Aorta (tissue), 5 donors: ENCODE measurements at regions of chr15 and their contacts with region 1.

Region 1: GRCh38 chr15:58933281-58934113 is at the start of gene SLTM:
- DNase-seq: peak; percentile 96 to 97
- ATAC-seq: peak; percentile 98
- H3K4me3 ChIP-seq: peak within 1 kb of the TSS; percentile 96 to 98
- H3K27ac ChIP-seq: peak within 1 kb of the TSS; percentile 91 to 99
- H3K4me1 ChIP-seq: no peaks in the 10 kb centered on the region
- H3K27me3 ChIP-seq: no peaks in the 10 kb centered on the region
- total RNA-seq, gene SLTM: 93.0 to 99.5 TPM

Region 2: DNA sequence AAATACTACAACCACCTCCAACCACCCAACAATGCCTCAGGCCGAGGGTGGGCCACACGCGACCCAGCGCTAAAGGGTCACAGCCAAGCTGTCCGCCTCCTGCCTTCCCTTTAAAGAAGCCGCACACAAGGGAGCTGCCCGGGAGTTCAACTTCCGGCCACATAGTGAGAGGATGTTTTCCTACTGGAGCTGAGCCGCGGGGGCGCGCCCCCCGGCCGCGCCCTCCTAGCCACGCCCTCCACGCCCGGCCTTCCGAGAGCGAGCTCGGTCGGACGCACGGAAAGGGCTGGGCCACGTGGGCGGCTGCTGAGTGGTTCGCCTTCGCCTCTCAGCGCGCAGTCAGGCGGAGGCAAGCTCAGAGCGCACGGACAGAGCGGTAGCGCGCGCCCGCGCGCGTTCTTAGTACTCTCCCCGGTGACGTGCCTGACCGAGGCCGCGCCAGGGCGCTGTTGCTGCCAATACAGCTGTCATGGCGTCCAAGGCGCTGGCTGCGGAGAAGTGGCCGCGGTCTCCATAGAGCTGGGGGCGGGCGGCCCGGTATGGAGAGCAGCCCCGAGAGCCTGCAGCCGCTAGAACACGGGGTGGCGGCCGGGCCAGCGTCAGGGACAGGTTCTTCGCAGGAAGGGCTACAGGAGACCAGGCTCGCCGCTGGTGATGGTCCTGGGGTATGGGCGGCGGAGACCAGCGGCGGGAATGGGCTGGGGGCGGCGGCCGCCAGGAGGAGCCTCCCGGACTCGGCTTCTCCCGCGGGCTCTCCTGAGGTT is 162.5 kb before region 1 on chr15 and contains the start of gene MINDY2:
- intact Hi-C with region 1: loop called in 1 of 2 experiments (anchors 10 kb)
- DNase-seq: peak; percentile 99 to 100
- ATAC-seq: peak; percentile 99
- H3K4me3 ChIP-seq: peak within 1 kb of the TSS; percentile 63 to 76
- H3K27ac ChIP-seq: peak within 1 kb of the TSS; percentile 44 to 89
- H3K4me1 ChIP-seq: no peaks in the 10 kb centered on the region
- H3K27me3 ChIP-seq: no peaks in the 10 kb centered on the region
- total RNA-seq, gene MINDY2: 46.3 to 48.0 TPM